Cardiac septum (tissue), 1 donor: ENCODE measurements at regions of chr10 and their contacts with region 1.

Region 1: GRCh38 chr10:22988581-22989360 is 60.9 kb downstream of the ARMC3 start:
- DNase-seq: no peak

Region 2: GRCh38 chr10:22573820-22574569 is 414.8 kb before region 1 on chr10:
- intact Hi-C with region 1: loop called (anchors 10 kb)
- DNase-seq: no peak

Region 3: DNA sequence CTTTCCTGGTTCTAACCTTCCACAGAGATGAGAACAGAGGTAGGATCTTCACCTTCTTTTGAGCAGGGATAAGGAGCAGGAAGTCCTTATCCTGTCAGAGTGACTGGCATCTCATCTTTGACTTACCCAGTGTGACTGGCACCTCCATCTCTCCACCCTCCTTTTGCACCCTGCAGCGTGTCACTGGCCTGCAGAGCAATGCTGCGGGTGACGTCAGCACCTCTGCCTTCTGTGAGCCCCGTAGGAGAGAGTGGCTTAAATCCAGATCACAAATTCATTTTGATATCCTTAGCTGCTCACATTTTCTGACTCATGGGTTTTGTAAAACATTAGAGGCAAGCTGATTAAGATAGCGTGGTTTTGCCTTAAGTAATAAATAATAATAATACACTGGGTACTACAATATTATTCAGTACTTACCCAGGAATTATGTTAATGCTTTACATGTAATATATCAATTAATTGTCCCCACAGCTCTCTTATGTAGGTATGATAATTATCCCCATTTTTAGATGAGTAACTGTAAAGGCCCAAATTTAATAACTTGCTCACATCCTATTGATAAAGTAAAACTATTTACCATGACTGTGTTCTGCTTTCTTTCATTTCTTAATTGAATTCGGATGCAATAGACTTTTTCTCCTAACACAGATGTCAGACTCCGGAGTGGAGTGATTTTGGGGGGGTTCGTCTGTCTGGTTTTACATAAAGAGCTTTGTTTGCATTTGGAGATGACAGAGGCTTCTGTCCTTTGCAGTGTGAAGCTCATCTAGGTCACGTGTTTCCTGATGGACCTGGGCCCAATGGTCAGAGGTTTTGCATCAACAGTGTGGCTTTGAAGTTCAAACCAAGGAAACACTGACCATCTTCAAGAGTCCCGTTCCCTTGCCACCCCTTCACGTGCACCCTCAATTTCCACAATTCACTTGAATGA is 131.5 kb after region 1 on chr10:
- intact Hi-C with region 1: no loop called
- DNase-seq: no peak